Endothelial cell of umbilical vein (primary cell): ENCODE measurements at regions of chr16 and their contacts with region 1.

Region 1: DNA sequence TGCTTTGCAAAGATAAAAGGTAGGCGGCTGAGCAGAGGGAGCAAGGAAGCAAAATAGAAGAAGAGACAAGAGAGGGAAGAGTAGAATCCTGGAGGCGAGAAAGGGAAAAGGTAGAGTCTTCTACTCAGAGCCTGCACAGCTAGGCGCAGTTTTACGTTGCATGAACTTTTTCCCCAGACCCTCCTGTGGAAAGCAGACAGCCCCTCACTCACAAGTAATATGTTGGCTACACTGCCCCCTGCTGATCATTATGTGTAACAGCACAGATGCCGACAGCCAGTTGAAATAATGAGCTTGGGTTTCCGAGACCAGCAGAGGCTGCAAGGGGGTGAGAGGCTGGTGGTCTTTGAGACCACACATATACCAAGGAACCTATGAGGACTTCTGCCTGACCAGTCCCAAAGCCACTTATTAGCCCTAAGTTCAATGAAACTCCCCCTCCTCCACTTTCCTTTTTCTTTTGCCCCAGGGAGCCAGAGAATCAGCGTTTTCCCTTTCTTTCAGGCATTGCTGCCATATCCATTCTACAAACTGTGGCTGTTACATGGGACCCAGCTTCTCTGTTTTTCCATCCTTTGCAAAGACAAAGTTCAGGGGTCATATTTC is 22.5 kb upstream of the CMTR2 start:
- DNase-seq: peak; percentile 28
- H3K4me3 ChIP-seq: no peak overlapping the region
- H3K27ac ChIP-seq: no peak overlapping the region
- H3K4me1 ChIP-seq: no peaks in the 10 kb centered on the region
- H3K27me3 ChIP-seq: no peaks in the 10 kb centered on the region
- CTCF ChIP-seq: peak; percentile 63 to 71
- POLR2A ChIP-seq: no peak

Region 2: DNA sequence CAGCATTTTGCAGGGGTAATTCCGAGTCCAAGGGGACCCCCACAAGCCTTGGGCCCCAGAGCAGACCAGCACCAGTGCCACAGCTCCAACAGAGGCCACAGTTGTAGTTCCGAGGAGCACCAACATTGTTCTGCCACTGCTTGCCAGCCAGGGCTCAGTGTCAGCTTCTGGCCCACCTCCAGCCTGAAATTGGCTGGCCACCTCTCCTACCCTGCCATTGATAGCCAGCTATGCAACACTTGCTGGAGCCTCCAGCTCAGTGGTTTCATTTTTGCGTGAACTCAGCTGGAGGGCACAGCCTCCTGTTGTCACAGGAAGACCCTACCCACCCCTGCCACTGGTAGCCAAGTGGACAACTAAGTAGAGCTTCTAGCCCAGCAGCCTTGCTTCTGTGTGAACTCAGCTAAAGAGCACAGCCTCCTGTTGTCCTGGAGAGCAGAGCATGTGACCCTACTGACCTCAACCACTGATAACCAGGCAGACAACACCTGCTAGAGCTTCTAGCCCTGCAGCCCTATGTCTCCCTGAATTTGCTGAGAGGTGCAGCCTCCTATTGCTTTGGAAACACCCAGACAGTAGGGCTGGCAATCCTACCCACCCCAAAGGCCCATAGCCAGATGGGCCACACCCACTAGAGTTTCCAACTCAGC is 106.0 kb before region 1 on chr16:
- CTCF ChIA-PET with region 1: interaction called, 17 read pairs
- POLR2A ChIA-PET with region 1: no interaction called
- dilution Hi-C with region 1: no loop called
- intact Hi-C with region 1: no loop called
- DNase-seq: no peak
- H3K4me3 ChIP-seq: no peak overlapping the region
- H3K27ac ChIP-seq: no peak overlapping the region
- H3K4me1 ChIP-seq: no peaks in the 10 kb centered on the region
- H3K27me3 ChIP-seq: no peaks in the 10 kb centered on the region
- CTCF ChIP-seq: no peak
- POLR2A ChIP-seq: no peak

Region 3: GRCh38 chr16:71249399-71249798 is 62.3 kb before region 1 on chr16:
- CTCF ChIA-PET with region 1: interaction called, 67 read pairs
- POLR2A ChIA-PET with region 1: no interaction called
- dilution Hi-C with region 1: no loop called
- intact Hi-C with region 1: loop called (anchors 2 kb)
- DNase-seq: no peak
- H3K4me3 ChIP-seq: no peak overlapping the region
- H3K27ac ChIP-seq: no peak overlapping the region
- H3K4me1 ChIP-seq: no peaks in the 10 kb centered on the region
- H3K27me3 ChIP-seq: no peaks in the 10 kb centered on the region
- CTCF ChIP-seq: no peak
- POLR2A ChIP-seq: no peak

Region 4: DNA sequence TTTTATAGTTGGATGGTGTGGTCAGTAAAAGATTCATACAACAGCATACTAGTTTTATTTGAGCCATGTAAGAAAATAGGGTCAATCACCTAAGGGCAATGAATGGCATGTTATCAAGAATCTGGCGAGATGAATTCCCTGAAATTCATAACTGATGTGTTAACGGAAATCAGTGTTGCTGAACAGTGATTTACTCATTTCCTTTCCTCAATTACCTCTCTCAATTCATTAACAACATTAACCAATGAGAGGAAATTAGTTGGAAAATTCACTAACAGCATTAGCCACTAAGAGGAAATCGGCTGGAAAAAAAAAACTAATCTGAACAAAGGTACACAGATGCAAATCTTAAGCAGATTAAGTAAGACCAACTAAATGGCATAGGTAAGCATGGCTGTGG is 28.7 kb before region 1 on chr16:
- CTCF ChIA-PET with region 1: interaction called, 24 read pairs
- POLR2A ChIA-PET with region 1: no interaction called
- dilution Hi-C with region 1: no loop called
- intact Hi-C with region 1: no loop called
- DNase-seq: peak; percentile 81
- H3K4me3 ChIP-seq: no peak overlapping the region
- H3K27ac ChIP-seq: peak overlapping the region; percentile 34
- H3K4me1 ChIP-seq: peaks cover 31% of the 10 kb centered on the region
- H3K27me3 ChIP-seq: no peaks in the 10 kb centered on the region
- CTCF ChIP-seq: no peak
- POLR2A ChIP-seq: peak; percentile 57

Region 5: GRCh38 chr16:71297341-71297634 is 14.4 kb before region 1 on chr16:
- CTCF ChIA-PET with region 1: interaction called, 28 read pairs
- POLR2A ChIA-PET with region 1: no interaction called
- dilution Hi-C with region 1: no loop called
- intact Hi-C with region 1: no loop called
- DNase-seq: no peak
- H3K4me3 ChIP-seq: no peak overlapping the region
- H3K27ac ChIP-seq: no peak overlapping the region
- H3K4me1 ChIP-seq: no peaks in the 10 kb centered on the region
- H3K27me3 ChIP-seq: peaks cover 4 to 6% of the 10 kb centered on the region in 2 experiments
- CTCF ChIP-seq: no peak
- POLR2A ChIP-seq: no peak

Region 6: DNA sequence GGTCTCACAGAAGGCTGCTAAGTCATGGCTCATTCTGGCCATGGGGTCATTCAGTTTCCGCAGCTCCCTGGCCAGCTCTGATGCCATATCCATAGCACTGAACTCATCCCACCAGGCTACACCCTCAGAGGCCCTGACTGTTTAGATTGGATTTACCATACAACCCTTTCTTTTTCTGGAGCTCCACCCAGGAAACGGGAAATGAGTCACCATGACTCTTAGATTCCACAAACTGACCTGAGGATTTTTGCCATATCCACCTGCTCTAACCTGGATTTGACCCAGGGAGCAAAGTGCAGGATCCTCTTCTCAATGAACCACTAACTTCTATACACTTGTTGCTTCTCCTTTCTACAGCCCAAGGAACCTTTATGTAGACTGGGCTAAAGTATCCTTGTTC is 26.5 kb after region 1 on chr16:
- CTCF ChIA-PET with region 1: interaction called, 21 read pairs
- POLR2A ChIA-PET with region 1: no interaction called
- dilution Hi-C with region 1: no loop called
- intact Hi-C with region 1: no loop called
- DNase-seq: no peak
- H3K4me3 ChIP-seq: no peak overlapping the region
- H3K27ac ChIP-seq: no peak overlapping the region
- H3K4me1 ChIP-seq: no peaks in the 10 kb centered on the region
- H3K27me3 ChIP-seq: no peaks in the 10 kb centered on the region
- CTCF ChIP-seq: no peak
- POLR2A ChIP-seq: no peak

Region 7: DNA sequence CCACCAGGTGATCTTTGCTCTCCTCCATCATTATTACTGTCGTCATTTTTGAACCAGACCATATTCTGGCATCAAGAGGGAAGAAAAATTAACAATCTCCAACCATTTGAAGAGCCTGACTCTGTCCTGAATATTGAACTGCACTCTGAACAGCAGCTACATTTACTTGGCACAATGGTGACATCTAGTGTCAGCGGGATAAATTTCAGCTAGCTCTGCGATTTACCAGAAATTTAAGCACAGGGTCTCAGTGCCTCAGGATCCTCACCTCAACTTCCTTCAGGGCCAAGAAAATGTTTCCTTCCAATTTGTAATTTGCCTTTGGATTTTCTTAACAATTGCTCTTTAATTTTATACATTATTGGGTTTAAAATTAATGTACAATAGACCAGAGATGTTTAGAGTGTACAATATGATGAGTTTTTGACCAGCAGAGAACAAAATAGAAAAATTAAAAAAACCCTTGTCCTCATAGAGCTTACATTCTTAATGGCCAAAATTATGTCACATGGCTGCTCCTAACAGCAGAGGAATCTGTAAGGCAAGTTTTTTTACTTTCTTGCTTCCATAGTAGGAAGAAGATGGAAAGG is 188.2 kb after region 1 on chr16:
- CTCF ChIA-PET with region 1: interaction called, 14 read pairs
- POLR2A ChIA-PET with region 1: no interaction called
- dilution Hi-C with region 1: no loop called
- intact Hi-C with region 1: no loop called
- DNase-seq: peak; percentile 71
- H3K4me3 ChIP-seq: no peak overlapping the region
- H3K27ac ChIP-seq: no peak overlapping the region
- H3K4me1 ChIP-seq: no peaks in the 10 kb centered on the region
- H3K27me3 ChIP-seq: no peaks in the 10 kb centered on the region
- CTCF ChIP-seq: peak; percentile 46 to 65
- POLR2A ChIP-seq: no peak